Activated CD4-positive, alpha-beta T cell treated with anti-CD3 and anti-CD28 coated beads, Interleukin-2, amount 10 ng/mL, durations not matched to agents 24 days and 14 days (primary cell): ENCODE measurements at regions of chr4 and their contacts with region 1.

Region 1: GRCh38 chr4:73019462-73020047 is 50.0 kb downstream of the COX18 start:
- DNase-seq: peak; percentile 70
- H3K4me3 Mint-ChIP-seq: no peak overlapping the region
- H3K27ac Mint-ChIP-seq: no peak overlapping the region
- H3K4me1 Mint-ChIP-seq: no peaks in the 10 kb centered on the region
- H3K27me3 Mint-ChIP-seq: peaks cover 11% of the 10 kb centered on the region

Region 2: GRCh38 chr4:72505314-72505744 is 514.2 kb before region 1 on chr4:
- intact Hi-C with region 1: loop called (anchors 1 kb)
- DNase-seq: peak; percentile 55
- H3K4me3 Mint-ChIP-seq: no peak overlapping the region
- H3K27ac Mint-ChIP-seq: no peak overlapping the region
- H3K4me1 Mint-ChIP-seq: no peaks in the 10 kb centered on the region
- H3K27me3 Mint-ChIP-seq: no peaks in the 10 kb centered on the region

Region 3: GRCh38 chr4:72701987-72702819 is 317.4 kb before region 1 on chr4:
- intact Hi-C with region 1: loop called (anchors 1 kb)
- DNase-seq: peak; percentile 79
- H3K4me3 Mint-ChIP-seq: peak overlapping the region; percentile 77
- H3K27ac Mint-ChIP-seq: no peak overlapping the region
- H3K4me1 Mint-ChIP-seq: peaks cover 2% of the 10 kb centered on the region
- H3K27me3 Mint-ChIP-seq: peaks cover 14% of the 10 kb centered on the region